Posterior cingulate gyrus (tissue), 11 donors: ENCODE measurements at regions of chr11 and their contacts with region 1.

Region 1: DNA sequence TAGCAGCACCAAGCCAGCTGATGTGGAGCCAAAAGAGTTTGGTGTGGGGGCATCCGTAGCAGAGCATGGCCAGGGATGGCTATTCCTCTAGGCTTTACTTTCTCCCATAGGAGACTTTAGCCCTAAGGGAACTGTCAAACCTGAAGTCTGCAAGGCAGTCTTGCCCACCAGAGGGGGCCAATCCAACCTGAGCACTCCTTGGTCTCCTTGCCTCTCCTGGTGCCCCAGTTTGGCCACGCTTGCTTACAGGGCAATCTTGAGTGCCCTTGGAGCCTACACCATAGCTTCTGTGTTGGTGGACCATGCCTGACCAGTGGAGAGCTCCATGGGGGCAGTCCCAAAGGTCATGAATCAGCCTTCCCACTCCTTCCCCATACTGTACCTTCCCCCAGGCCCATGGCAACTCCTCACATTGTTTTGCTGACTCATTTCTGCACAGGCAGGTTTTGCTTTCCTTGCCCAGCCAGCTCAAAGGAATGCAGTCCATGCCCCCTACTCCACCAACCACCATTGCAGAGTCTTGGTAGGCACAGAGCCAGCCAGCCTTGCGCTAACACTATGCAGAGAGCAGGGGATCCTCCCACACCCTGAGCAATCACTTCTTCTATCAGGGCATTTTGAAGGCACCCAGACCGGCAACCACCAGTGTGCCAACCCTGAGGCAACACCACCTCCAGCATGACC is 1421.2 kb upstream of the RAG2 start:
- DNase-seq: peak in 1 of 10 donors; percentile 55

Region 2: GRCh38 chr11:37804666-37805065 is 214.5 kb before region 1 on chr11:
- intact Hi-C with region 1: no loop called
- DNase-seq: no peak

Region 3: DNA sequence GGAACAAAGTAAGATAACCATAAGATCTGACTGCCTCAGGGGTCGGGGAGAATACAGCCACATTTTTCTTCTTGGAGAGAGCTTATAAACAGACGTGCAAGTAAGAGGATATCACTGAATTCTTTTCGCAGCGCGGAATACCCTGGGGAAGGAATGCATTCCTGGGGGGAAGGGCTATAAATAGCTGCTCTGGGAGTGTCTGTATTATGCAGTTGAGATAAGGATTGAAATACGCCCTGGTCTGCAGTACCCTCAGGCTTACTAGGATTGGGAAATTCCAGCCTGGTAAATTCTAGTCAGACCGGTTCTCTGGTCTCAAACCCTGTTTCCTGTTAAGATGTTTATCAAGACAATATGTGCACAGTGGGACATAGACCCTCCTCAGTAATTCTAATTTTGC is 70.5 kb after region 1 on chr11:
- intact Hi-C with region 1: loop called (anchors 2 kb)
- DNase-seq: no peak